Naive thymus-derived CD4-positive, alpha-beta T cell (primary cell): ENCODE measurements at regions of chr1 and their contacts with region 1.

Region 1: DNA sequence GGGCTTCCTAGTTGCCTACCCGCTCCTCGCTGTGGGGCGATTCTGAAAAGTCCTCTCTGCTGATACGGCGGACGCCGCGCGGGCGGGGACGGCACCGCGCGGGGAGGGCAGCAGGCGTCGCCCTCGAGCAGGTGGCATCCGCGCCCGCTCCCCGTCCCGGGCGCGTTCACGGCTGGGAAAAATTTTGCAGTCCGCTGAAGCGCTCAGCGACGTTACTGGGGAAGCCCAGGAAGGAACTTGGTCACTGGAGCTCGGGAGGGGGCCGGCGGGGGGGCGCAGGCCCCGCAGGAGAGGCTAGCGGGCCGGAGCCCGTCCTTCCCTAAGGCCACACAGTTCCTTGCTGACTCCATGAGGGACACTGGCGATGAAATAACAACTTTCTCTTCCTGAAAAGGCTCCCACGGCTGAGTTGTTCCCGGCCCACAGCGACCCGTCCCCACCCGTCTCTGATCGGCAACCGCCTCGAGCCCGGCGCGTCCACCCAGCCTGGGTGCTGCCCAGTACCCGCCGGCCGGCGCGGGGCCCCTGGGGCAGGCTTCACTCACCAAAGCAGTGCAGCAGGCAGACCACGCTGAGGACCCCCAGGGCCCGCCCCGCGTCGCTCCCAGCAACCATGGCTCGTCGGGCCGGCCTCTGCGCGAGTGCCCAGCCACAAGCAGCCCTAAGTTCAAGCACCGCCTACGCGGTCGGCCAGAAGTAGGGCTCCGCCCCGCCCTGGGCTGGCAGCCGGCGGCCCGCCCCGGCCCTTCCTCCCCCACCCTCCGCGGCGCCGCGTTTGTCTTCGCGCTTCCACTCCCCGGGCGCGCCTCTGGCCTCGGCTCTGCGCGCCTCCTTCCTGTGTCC is at the start of gene CD58:
- DNase-seq: peak; percentile 35 to 86 (median 64)
- ATAC-seq: peak; percentile 87
- H3K4me3 ChIP-seq: peak within 1 kb of the TSS; percentile 83
- H3K4me3 Mint-ChIP-seq: peak within 1 kb of the TSS; percentile 86 to 97 (median 90)
- H3K27ac ChIP-seq: peak within 1 kb of the TSS; percentile 70
- H3K27ac Mint-ChIP-seq: peak within 1 kb of the TSS in 7 of 9 donors; percentile 68 to 95 (median 78)
- H3K4me1 ChIP-seq: peaks cover 10 to 30% of the 10 kb centered on the region in 2 donors
- H3K4me1 Mint-ChIP-seq: peaks cover 12 to 62% (median 31%) of the 10 kb centered on the region in 7 donors
- H3K27me3 ChIP-seq: no peaks in the 10 kb centered on the region
- H3K27me3 Mint-ChIP-seq: no peaks in the 10 kb centered on the region
- total RNA-seq, gene CD58: 3.3 to 35.0 (median 4.4) TPM

Region 2: GRCh38 chr1:116418091-116418830 is 152.3 kb before region 1 on chr1:
- CTCF ChIA-PET with region 1: no interaction called
- POLR2A ChIA-PET with region 1: no interaction called
- intact Hi-C with region 1: loop called in 1 of 2 experiments (anchors 5 kb)
- DNase-seq: peak; percentile 76 to 90 (median 88)
- ATAC-seq: peak; percentile 97
- H3K4me3 ChIP-seq: peak overlapping the region; percentile 97
- H3K4me3 Mint-ChIP-seq: peak overlapping the region; percentile 85 to 95 (median 90)
- H3K27ac ChIP-seq: peak overlapping the region; percentile 87
- H3K27ac Mint-ChIP-seq: peak overlapping the region; percentile 83 to 98 (median 95)
- H3K4me1 ChIP-seq: peaks cover 12 to 18% of the 10 kb centered on the region in 2 donors
- H3K4me1 Mint-ChIP-seq: peaks cover 22 to 52% (median 47%) of the 10 kb centered on the region in 7 donors
- H3K27me3 ChIP-seq: no peaks in the 10 kb centered on the region
- H3K27me3 Mint-ChIP-seq: peaks cover 0 to 15% (median 0%) of the 10 kb centered on the region in 5 donors

Region 3: DNA sequence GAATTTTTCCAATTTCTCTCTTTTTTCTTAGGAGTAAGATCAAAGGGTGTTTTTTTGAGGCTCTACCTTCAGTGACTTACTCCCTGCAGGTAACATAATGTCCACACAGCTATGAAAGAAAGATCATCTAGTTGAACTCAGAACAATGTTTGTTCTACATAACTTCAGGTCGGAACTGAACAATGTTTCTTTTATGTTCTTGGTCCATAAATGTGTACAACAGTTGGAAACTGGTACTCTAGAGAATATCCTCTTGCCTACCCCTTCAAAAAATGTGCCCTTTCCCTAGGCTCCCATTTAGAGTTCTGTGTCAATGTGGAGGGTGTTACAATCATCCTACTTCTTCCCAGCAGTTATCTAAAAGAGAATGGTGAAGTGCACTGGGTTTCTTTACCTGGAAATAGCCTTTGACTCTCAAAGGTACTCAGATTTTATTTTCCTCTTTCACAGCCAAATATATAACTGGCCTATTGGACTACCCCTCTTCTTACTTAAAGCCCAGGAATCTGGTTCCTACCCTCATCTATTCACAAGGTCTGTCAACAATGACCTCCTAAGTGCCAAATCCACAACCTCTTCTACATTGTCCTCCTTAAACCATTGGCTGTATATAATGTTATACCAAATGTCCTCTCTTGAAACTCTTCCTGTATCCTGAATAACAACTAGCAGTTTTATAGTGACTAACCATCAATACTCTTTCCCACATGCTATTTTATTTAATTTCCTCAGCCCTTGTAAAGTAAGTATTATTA is 42.1 kb before region 1 on chr1:
- CTCF ChIA-PET with region 1: no interaction called
- POLR2A ChIA-PET with region 1: no interaction called
- intact Hi-C with region 1: no loop called
- DNase-seq: no peak
- ATAC-seq: no peak
- H3K4me3 ChIP-seq: no peak overlapping the region
- H3K4me3 Mint-ChIP-seq: no peak overlapping the region
- H3K27ac ChIP-seq: no peak overlapping the region
- H3K27ac Mint-ChIP-seq: no peak overlapping the region
- H3K4me1 ChIP-seq: no peaks in the 10 kb centered on the region
- H3K4me1 Mint-ChIP-seq: peaks cover 0 to 12% (median 0%) of the 10 kb centered on the region in 7 donors
- H3K27me3 ChIP-seq: no peaks in the 10 kb centered on the region
- H3K27me3 Mint-ChIP-seq: no peaks in the 10 kb centered on the region

Region 4: DNA sequence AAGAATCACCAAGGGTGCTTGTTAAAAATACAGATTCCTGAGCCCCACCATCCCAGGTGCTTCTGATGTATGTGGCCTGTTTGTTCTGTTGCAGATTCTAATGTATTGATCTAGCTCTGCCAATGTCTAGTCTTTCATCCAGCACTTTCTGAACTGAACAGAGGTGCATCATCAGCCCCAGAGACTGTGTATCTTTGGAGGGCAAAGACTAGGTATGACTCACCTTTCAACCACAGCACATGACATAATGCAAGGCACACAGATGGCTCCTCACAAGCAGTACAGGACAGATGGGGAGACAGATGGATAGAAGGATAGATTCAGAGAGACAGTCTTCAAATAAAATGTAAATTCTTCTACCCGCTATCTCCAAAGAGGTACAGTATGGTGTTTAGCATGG is 32.0 kb before region 1 on chr1:
- CTCF ChIA-PET with region 1: no interaction called
- POLR2A ChIA-PET with region 1: no interaction called
- intact Hi-C with region 1: loop called in 1 of 2 experiments (anchors 5 kb)
- DNase-seq: peak in 1 of 9 donors; percentile 46
- ATAC-seq: peak; percentile 22
- H3K4me3 ChIP-seq: no peak overlapping the region
- H3K4me3 Mint-ChIP-seq: peak overlapping the region in 1 of 10 donors; percentile 3
- H3K27ac ChIP-seq: no peak overlapping the region
- H3K27ac Mint-ChIP-seq: peak overlapping the region in 1 of 9 donors; percentile 56
- H3K4me1 ChIP-seq: peaks cover 0 to 12% of the 10 kb centered on the region in 2 donors
- H3K4me1 Mint-ChIP-seq: peaks cover 3 to 55% (median 7%) of the 10 kb centered on the region in 7 donors
- H3K27me3 ChIP-seq: no peaks in the 10 kb centered on the region
- H3K27me3 Mint-ChIP-seq: no peaks in the 10 kb centered on the region

Region 5: DNA sequence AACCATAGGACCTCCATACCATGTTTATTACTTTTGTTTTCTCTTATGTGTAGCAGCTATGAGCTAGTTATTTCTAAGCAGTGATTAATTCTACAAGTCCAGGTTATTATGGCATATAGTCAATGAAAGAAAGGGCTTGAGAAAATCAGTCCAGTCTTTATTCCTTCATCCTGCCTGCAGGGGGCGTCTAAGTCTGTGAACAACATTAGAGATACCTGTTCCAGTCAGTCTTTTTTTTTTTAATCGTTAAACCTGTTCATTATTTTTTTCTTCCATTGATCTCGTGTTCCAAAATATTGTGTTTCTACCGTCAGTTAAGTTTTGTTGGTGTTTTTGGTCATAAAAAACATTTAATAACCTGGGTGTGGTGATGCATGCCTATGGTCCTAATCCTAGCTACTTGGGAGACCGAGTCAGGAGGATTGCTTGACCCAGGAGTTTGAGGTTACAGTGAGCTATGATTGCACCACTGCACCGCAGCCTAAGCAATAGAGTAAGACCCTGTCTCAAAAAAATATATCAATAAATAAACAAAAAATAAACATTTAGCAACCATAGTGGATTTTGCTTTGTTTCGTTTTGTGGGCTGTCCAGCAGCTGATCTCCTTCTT is 154.3 kb after region 1 on chr1:
- CTCF ChIA-PET with region 1: no interaction called
- POLR2A ChIA-PET with region 1: interaction called, 3 read pairs
- intact Hi-C with region 1: loop called in 1 of 2 experiments (anchors 5 kb)
- DNase-seq: peak; percentile 45 to 74 (median 70)
- ATAC-seq: peak; percentile 77
- H3K4me3 ChIP-seq: no peak overlapping the region
- H3K4me3 Mint-ChIP-seq: no peak overlapping the region
- H3K27ac ChIP-seq: no peak overlapping the region
- H3K27ac Mint-ChIP-seq: no peak overlapping the region
- H3K4me1 ChIP-seq: no peaks in the 10 kb centered on the region
- H3K4me1 Mint-ChIP-seq: peaks cover 4 to 27% (median 13%) of the 10 kb centered on the region in 7 donors
- H3K27me3 ChIP-seq: no peaks in the 10 kb centered on the region
- H3K27me3 Mint-ChIP-seq: no peaks in the 10 kb centered on the region

Region 6: GRCh38 chr1:116853670-116854402 is 283.3 kb after region 1 on chr1:
- CTCF ChIA-PET with region 1: no interaction called
- POLR2A ChIA-PET with region 1: no interaction called
- intact Hi-C with region 1: loop called in 1 of 2 experiments (anchors 1 kb)
- DNase-seq: no peak
- ATAC-seq: peak; percentile 48
- H3K4me3 ChIP-seq: no peak overlapping the region
- H3K4me3 Mint-ChIP-seq: no peak overlapping the region
- H3K27ac ChIP-seq: no peak overlapping the region
- H3K27ac Mint-ChIP-seq: peak overlapping the region in 4 of 9 donors; percentile 43 to 87 (median 70)
- H3K4me1 ChIP-seq: peaks cover 0 to 5% of the 10 kb centered on the region in 2 donors
- H3K4me1 Mint-ChIP-seq: peaks cover 13 to 27% (median 17%) of the 10 kb centered on the region in 7 donors
- H3K27me3 ChIP-seq: no peaks in the 10 kb centered on the region
- H3K27me3 Mint-ChIP-seq: no peaks in the 10 kb centered on the region

Region 7: DNA sequence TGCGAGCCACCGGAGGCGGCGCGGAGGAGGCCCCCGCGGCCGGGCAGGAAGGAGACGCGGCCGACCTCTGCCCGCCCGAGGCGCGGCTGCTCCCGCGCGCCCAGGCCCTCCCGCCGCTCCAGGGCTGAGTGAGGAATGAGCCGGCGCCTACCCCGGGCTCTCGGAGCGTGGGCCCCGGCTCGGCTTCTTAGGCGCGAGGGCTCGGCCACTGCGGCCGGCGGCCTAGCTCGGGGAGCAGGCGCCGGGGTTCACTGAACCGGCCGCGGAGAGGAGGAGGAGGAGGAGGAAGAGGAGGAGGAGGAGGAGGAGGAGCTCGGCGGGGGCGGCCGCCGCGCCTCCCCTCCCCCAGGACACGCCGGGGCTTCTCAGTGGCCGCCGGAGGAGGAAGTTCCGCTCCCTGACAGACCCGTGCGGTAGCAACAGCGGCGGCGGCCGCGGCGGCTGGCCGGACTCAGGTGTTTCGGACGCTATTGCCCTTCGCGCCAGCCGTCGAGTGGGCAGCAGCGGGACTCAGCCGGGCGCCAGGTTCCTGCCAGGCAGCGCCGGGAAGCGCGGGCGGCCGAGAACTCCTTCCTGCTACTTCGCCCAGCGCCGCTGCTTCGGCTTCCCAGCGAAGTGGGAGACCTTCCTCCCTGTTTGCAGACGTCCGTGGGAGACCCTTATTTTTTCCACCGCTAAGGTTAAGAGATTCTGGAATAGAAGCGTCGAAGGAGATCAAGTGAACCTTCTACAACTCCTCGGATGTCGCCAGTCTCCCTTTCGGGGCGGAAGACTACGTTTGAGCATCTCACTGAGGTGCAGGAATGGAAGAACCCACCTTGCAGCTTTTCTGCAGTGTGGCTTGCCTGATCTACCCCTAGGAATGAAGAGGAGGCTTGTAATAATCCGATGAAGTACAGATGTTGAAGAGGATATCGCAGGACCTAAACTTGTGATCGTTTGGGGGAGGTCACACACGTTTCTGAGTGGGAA is 796.8 kb after region 1 on chr1 and contains the start of gene MAN1A2:
- CTCF ChIA-PET with region 1: no interaction called
- POLR2A ChIA-PET with region 1: no interaction called
- intact Hi-C with region 1: loop called in 1 of 2 experiments (anchors 5 kb)
- DNase-seq: peak in 7 of 9 donors; percentile 59 to 79 (median 75)
- ATAC-seq: peak; percentile 78
- H3K4me3 ChIP-seq: peak within 1 kb of the TSS; percentile 83
- H3K4me3 Mint-ChIP-seq: peak within 1 kb of the TSS; percentile 92 to 98 (median 95)
- H3K27ac ChIP-seq: peak within 1 kb of the TSS; percentile 91
- H3K27ac Mint-ChIP-seq: peak within 1 kb of the TSS; percentile 92 to 99 (median 97)
- H3K4me1 ChIP-seq: peaks cover 23 to 44% of the 10 kb centered on the region in 2 donors
- H3K4me1 Mint-ChIP-seq: peaks cover 46 to 82% (median 73%) of the 10 kb centered on the region in 7 donors
- H3K27me3 ChIP-seq: no peaks in the 10 kb centered on the region
- H3K27me3 Mint-ChIP-seq: no peaks in the 10 kb centered on the region
- total RNA-seq, gene MAN1A2: 40.4 to 63.4 (median 47.1) TPM

Region 8: GRCh38 chr1:117929173-117929989 is 1358.8 kb after region 1 on chr1 and contains the starts of genes GDAP2 and WDR3:
- CTCF ChIA-PET with region 1: no interaction called
- POLR2A ChIA-PET with region 1: no interaction called
- intact Hi-C with region 1: loop called in 1 of 2 experiments (anchors 5 kb)
- DNase-seq: peak; percentile 84 to 98 (median 94)
- ATAC-seq: peak; percentile 96
- H3K4me3 ChIP-seq: peak within 1 kb of the TSS; percentile 94
- H3K4me3 Mint-ChIP-seq: peak within 1 kb of the TSS; percentile 90 to 97 (median 94)
- H3K27ac ChIP-seq: peak within 1 kb of the TSS; percentile 89
- H3K27ac Mint-ChIP-seq: peak within 1 kb of the TSS; percentile 74 to 97 (median 94)
- H3K4me1 ChIP-seq: peaks cover 24 to 30% of the 10 kb centered on the region in 2 donors
- H3K4me1 Mint-ChIP-seq: peaks cover 41 to 79% (median 71%) of the 10 kb centered on the region in 7 donors
- H3K27me3 ChIP-seq: no peaks in the 10 kb centered on the region
- H3K27me3 Mint-ChIP-seq: peaks cover 0 to 2% (median 0%) of the 10 kb centered on the region in 5 donors
- total RNA-seq, gene GDAP2: 22.3 to 31.2 (median 25.2) TPM
- total RNA-seq, gene WDR3: 12.2 to 34.6 (median 30.0) TPM